ENCODE measurements at regions of chr17 and their contacts with region 1.

Region 1: DNA sequence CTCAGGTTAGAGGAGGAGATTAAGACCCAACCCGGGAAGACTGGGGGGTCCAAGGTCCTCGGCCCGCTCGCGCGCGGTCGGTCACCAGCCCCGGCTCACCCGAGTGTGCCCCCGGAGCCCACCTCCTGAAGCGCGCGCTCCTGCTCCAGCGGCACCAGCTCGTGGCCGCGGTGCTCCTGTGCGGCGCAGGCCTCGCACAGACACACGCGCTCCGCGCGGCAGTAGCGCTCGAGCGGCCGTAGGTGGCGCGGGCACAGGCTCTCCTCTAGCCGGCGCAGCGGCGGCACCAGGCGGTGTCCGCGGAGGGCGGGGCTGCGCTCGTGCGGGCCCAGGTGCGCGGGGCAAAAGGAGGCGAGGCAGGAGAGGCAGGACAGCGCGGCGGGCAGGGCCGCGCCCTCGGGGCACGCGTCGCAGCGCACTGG is 618 bp downstream of the TRIM47 start:
- DNase-seq: peak; percentile 76
- H3K4me3 Mint-ChIP-seq: peak overlapping the region; percentile 86
- H3K27ac Mint-ChIP-seq: peak overlapping the region; percentile 89
- H3K4me1 Mint-ChIP-seq: peaks cover 13% of the 10 kb centered on the region
- H3K27me3 Mint-ChIP-seq: no peaks in the 10 kb centered on the region
- CTCF ChIP-seq: peak; percentile 34

Region 2: GRCh38 chr17:75679706-75680442 is 197.9 kb before region 1 on chr17:
- CTCF ChIA-PET with region 1: interaction called, 6 read pairs
- POLR2A ChIA-PET with region 1: interaction called, 15 read pairs
- intact Hi-C with region 1: no loop called
- DNase-seq: peak; percentile 92
- H3K4me3 Mint-ChIP-seq: peak overlapping the region; percentile 60
- H3K27ac Mint-ChIP-seq: peak overlapping the region; percentile 91
- H3K4me1 Mint-ChIP-seq: peaks cover 40% of the 10 kb centered on the region
- H3K27me3 Mint-ChIP-seq: no peaks in the 10 kb centered on the region
- CTCF ChIP-seq: peak; percentile 60

Region 3: DNA sequence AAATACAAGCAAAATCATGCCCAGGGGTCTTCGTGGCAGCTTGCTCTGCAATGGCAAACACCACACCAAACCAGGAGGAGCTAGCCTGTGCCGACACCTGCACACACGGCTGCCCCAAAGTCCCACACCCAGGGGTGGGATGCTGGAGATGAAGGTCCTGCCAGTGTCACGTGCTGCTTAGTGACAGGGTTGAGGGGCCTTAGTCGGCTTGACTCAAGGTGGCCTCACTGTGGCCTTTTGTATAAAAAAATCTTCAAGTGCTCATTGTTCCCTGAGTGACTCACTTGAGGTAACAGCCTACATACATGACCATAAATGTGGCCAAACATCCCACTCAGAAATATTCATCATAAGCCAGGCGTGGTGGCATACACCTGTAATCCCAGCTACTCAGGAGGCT is 11.7 kb after region 1 on chr17:
- CTCF ChIA-PET with region 1: interaction called, 13 read pairs
- POLR2A ChIA-PET with region 1: interaction called, 80 read pairs
- intact Hi-C with region 1: no loop called
- DNase-seq: no peak
- H3K4me3 Mint-ChIP-seq: no peak overlapping the region
- H3K27ac Mint-ChIP-seq: no peak overlapping the region
- H3K4me1 Mint-ChIP-seq: peaks cover 8% of the 10 kb centered on the region
- H3K27me3 Mint-ChIP-seq: no peaks in the 10 kb centered on the region
- CTCF ChIP-seq: no peak

Region 4: DNA sequence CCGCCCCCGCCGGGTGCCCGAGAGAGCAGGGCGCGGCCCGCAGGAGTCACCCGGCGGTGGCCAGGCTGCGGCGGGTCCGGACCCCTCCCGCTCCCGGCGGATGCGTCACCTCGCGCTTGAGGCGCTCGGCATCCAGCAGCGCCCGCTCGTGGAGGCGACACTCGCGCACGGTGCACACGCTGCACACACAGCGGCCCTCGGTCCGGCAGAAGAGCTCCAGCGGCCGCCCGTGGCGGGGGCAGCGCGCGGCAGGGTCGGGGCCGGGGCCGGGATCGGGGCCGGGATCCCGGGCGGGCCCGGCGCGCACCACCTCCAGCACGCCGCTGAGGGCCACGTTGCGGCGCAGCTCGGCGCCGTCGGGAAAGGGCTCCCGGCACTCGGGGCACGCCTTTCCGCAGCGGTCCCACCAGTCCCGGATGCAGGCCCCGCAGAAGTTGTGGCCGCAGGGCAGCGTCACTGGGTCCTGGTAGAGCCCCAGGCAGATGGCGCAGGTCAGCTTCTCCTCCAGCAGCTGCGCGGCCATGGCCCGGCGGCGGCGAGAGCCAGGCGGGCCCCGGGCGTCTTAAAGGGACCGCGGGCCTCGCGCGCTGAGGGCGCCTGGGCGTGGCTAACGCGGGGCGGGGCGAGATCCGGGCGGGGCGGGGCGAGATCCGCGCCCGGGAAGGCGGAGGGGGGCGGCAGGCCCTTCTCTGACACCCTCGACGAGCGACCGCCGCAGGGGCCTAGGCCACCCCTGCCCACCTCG is 18.8 kb after region 1 on chr17 and contains the start of gene TRIM65:
- CTCF ChIA-PET with region 1: interaction called, 12 read pairs
- POLR2A ChIA-PET with region 1: interaction called, 80 read pairs
- intact Hi-C with region 1: no loop called
- DNase-seq: peak; percentile 71
- H3K4me3 Mint-ChIP-seq: peak within 1 kb of the TSS; percentile 74
- H3K27ac Mint-ChIP-seq: peak within 1 kb of the TSS; percentile 70
- H3K4me1 Mint-ChIP-seq: peaks cover 19% of the 10 kb centered on the region
- H3K27me3 Mint-ChIP-seq: no peaks in the 10 kb centered on the region
- CTCF ChIP-seq: peak; percentile 14
- total RNA-seq, gene TRIM65: 15.9 and 17.4 TPM in 2 replicates

Region 5: DNA sequence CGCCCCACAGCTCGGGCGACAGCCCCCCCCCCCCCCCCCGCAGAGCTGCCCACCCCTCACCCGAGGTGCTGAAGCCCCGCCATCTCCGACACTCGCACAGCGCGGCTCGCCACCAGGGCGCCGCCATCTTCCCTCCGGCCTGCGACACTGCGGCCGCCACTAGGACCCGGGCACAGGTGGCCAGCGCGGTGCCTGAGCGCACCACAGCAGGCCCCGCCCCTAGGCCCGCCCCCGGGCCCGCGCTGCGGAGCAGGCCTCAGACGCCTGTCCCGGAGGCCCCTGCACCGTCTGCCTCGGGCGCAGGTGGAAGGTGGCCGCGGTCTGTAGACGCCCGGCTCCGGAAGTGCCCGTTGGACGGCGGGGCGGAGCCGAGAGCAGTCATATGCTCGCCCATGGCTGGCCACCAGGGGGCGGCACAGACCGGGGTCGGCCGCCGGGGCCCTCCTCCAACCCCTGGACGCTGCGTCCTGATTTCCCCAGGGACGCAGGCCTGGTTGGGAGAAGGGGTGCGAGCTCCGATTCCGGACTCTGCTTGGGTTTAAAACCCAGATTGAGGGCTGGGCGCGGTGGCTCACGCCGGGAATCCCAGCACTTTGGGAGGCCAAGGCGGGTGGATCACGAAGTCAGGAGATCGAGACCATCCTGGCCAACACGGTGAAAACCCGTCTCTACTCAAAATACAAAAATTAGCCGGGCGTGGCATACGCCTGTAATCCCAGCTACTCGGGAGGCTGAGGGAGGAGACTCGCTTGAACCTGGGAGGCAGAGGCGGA is 27.2 kb after region 1 on chr17 and contains the start of gene MRPL38:
- CTCF ChIA-PET with region 1: interaction called, 14 read pairs
- POLR2A ChIA-PET with region 1: interaction called, 34 read pairs
- intact Hi-C with region 1: no loop called
- DNase-seq: peak; percentile 93
- H3K4me3 Mint-ChIP-seq: peak within 1 kb of the TSS; percentile 91
- H3K27ac Mint-ChIP-seq: peak within 1 kb of the TSS; percentile 92
- H3K4me1 Mint-ChIP-seq: peaks cover 16% of the 10 kb centered on the region
- H3K27me3 Mint-ChIP-seq: no peaks in the 10 kb centered on the region
- CTCF ChIP-seq: peak; percentile 96
- total RNA-seq, gene MRPL38: 97.9 and 111 TPM in 2 replicates

Measured in MCF 10A (cell line).